BJ (cell line): ENCODE measurements at regions of chr15 and their contacts with region 1.

Region 1: GRCh38 chr15:58182460-58183163 is 44.4 kb downstream of the AQP9 start:
- DNase-seq: no peak
- H3K4me3 ChIP-seq: no peak overlapping the region
- H3K27me3 ChIP-seq: peaks cover 2% of the 10 kb centered on the region; the same call in 1 of the 2 replicates
- CTCF ChIP-seq: peak; percentile 94

Region 2: GRCh38 chr15:57866149-57866736 is 316.4 kb before region 1 on chr15:
- CTCF ChIA-PET with region 1: interaction called, 13 read pairs
- POLR2A ChIA-PET with region 1: no interaction called
- DNase-seq: no peak
- H3K4me3 ChIP-seq: no peak overlapping the region
- H3K27me3 ChIP-seq: no peaks in the 10 kb centered on the region
- CTCF ChIP-seq: peak; percentile 84

Region 3: DNA sequence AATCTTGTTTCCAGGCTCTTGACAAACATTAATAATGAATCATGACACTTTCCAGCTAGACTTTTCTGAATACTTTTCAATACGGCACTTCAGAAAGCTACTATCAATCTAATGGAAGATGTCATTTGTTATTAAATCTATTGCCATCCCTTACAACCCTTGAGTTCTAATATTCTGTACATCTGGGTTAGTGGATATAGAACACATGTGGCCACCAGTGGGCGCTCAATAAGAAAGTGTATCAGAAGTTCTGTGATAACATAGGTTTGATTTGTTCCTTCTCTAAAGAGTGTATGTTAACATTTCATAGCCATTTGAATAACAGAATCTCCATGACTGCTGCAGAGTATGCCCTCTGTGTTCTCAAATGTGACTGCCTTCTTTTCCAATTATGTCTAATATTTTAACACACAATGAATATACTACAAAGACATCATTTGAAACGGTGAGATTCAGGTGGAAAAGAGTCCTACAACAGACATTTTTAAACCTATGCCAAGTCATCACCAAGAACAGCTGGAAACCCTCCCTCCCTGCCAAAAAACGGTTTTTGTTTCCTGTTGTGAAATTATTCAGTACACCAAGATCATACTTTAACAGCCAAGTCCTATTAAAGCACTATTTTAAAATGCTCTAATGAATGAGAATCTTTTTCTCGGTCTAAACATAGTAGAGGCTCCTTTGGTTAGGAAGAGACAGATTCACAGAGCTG is 139.3 kb before region 1 on chr15:
- CTCF ChIA-PET with region 1: interaction called, 19 read pairs
- POLR2A ChIA-PET with region 1: no interaction called
- DNase-seq: no peak
- H3K4me3 ChIP-seq: no peak overlapping the region
- H3K27me3 ChIP-seq: no peaks in the 10 kb centered on the region; the same call in 1 of the 2 replicates
- CTCF ChIP-seq: peak; percentile 77

Region 4: DNA sequence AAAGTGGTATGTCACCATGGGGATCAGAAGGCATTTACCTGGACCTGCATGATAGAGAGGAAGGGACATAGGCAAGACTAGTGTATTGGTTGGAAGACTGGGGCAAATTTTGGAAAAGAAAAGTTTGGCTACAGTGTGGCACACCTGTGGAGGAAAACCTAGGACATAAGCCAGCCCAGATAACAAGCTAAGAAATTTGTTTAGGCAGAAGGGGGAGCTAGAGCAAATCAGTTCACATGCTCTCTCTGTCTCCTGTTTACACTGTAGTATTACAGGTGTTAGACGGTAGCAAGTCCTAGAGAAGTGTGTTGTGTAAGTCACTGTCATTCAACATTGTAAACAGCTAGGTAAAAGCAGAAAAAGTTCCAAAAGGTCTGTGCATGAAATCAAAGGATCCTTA is 105.2 kb before region 1 on chr15:
- CTCF ChIA-PET with region 1: interaction called, 14 read pairs
- POLR2A ChIA-PET with region 1: no interaction called
- DNase-seq: no peak
- H3K4me3 ChIP-seq: no peak overlapping the region
- H3K27me3 ChIP-seq: no peaks in the 10 kb centered on the region; the same call in 1 of the 2 replicates
- CTCF ChIP-seq: no peak

Region 5: DNA sequence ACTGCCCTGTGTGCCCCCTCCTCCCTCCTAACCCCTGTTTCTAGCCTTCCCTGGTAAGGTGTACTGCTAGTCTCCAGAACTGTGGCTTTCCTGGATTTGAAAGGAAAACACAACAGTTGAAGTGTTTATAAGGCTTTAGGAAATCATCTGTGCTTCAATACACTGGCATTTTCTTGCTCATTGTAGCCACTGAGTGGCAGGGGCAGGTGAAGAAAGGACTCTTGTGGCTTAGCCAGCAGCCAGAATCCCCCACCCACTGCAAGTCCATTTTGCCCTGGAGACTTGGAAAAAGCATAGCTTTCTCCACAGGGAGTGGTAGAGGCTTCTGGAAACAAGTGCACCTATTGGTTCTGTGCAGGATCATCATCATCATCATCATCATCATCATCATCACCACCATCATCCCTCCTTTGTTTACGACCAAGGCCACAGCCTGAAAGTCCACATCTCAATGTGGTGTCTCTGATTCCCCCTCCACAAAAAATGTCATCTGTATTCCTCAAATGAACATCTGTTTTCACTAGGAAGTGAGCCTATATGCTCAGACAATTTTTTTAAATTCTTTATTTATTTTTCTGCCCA is 11.0 kb before region 1 on chr15:
- CTCF ChIA-PET with region 1: interaction called, 18 read pairs
- POLR2A ChIA-PET with region 1: no interaction called
- DNase-seq: no peak
- H3K4me3 ChIP-seq: no peak overlapping the region
- H3K27me3 ChIP-seq: peaks cover 2% of the 10 kb centered on the region
- CTCF ChIP-seq: no peak

Region 6: GRCh38 chr15:58221591-58222241 is 39.1 kb after region 1 on chr15:
- CTCF ChIA-PET with region 1: interaction called, 16 read pairs
- POLR2A ChIA-PET with region 1: no interaction called
- DNase-seq: no peak
- H3K4me3 ChIP-seq: no peak overlapping the region
- H3K27me3 ChIP-seq: no peaks in the 10 kb centered on the region
- CTCF ChIP-seq: peak; percentile 62